ENCODE measurements at regions of chr5 and their contacts with region 1.

Region 1: GRCh38 chr5:131634996-131635754 is at the start of gene RAPGEF6:
- DNase-seq: peak; percentile 100
- H3K4me3 Mint-ChIP-seq: no peak within 1 kb of the TSS
- H3K27ac Mint-ChIP-seq: peak within 1 kb of the TSS; percentile 97
- H3K4me1 Mint-ChIP-seq: peaks cover 6% of the 10 kb centered on the region
- H3K27me3 Mint-ChIP-seq: no peaks in the 10 kb centered on the region
- CTCF ChIP-seq: no peak
- total RNA-seq, gene RAPGEF6: 20.5 and 23.4 TPM in 2 replicates

Region 2: DNA sequence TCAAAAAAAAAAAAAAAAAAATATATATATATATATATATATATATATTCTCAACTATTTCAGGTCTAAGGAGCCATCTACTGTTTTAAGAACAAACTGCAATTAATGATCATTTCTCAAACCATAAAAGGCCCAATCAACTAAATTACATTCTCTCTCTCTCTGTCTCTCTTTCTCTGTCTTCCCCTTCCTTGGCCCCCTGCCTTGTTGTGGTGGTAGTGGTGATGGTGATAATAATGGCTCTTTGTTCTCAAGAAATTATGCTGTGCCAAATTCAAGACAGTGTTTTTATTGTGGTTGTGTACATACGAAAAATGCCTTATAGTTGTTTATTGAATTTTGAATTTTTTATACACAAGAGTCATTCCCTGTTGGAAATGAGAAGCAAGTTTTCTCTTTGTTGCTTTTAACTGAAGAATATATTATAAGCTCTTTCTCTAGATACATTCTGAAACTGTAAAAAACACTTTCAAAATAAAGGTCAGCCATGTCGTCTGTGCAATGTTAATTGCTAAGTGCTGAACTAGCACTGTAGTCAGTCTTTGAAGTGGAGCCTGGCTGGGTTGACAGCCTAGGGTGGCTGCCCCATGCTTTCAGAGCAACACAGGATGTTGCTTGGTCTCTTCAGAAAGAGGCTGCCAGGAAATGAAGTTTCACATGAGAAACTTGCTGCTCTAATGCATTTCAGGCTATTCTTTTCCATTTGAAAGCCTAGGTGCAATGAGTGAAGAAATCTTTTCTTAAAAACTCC is 566.1 kb before region 1 on chr5:
- CTCF ChIA-PET with region 1: no interaction called
- POLR2A ChIA-PET with region 1: no interaction called
- intact Hi-C with region 1: no loop called
- DNase-seq: no peak
- H3K4me3 Mint-ChIP-seq: no peak overlapping the region
- H3K27ac Mint-ChIP-seq: no peak overlapping the region
- H3K4me1 Mint-ChIP-seq: peaks cover 9% of the 10 kb centered on the region
- H3K27me3 Mint-ChIP-seq: no peaks in the 10 kb centered on the region
- CTCF ChIP-seq: no peak

Region 3: GRCh38 chr5:131647048-131647769 is 12.0 kb after region 1 on chr5:
- CTCF ChIA-PET with region 1: interaction called, 5 read pairs
- POLR2A ChIA-PET with region 1: interaction called, 10 read pairs
- intact Hi-C with region 1: no loop called
- DNase-seq: no peak
- H3K4me3 Mint-ChIP-seq: no peak overlapping the region
- H3K27ac Mint-ChIP-seq: no peak overlapping the region
- H3K4me1 Mint-ChIP-seq: peaks cover 5% of the 10 kb centered on the region
- H3K27me3 Mint-ChIP-seq: no peaks in the 10 kb centered on the region
- CTCF ChIP-seq: no peak